Sciatic nerve (tissue), 2 donors: ENCODE measurements at regions of chr22 and their contacts with region 1.

Region 1: GRCh38 chr22:50540381-50540780 is 5.3 kb upstream of the KLHDC7B start:
- DNase-seq: no peak
- ATAC-seq: no peak

Region 2: GRCh38 chr22:50525390-50526068 is 14.9 kb before region 1 on chr22 and contains the start of gene SCO2:
- intact Hi-C with region 1: loop called (anchors 1 kb)
- DNase-seq: peak; percentile 99
- ATAC-seq: peak; percentile 79
- total RNA-seq, gene SCO2: 1.9 TPM